A549 (cell line): ENCODE measurements at regions of chr18 and their contacts with region 1.

Region 1: DNA sequence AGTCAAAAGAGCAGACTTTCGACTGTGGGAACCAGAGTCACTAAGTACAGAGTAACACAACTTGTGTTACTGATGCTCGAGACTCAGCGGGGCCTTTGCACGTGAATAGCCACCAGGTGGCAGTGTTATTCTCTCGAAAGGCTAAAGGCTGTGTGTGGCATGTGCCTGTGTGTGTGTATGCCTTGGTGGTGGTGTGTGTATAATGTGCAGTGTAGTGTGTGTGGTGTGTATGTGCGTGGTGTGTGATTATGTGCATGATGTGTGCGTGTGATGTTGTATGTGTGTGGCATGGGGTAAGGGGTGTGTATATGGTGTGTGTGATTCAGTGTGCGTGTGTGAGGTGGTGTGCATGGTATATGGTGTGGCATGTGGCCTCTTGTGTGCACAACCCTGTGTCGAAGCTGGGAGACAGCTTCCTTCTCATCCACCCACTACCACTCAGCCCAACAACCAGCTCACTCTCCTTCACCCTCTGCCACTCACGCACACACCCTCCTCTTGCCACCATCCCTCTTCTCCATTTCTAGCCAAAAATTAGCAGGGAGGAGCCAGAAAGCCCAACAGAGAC is 83.0 kb upstream of the ZNF532 start:
- DNase-seq: peak; percentile 51 to 89
- ATAC-seq: peak; percentile 10 to 35; a peak in 3 of 6 replicates
- H3K4me3 ChIP-seq: no peak overlapping the region
- H3K27ac ChIP-seq: peak overlapping the region; percentile 98 to 99
- H3K4me1 ChIP-seq: peaks cover 38% of the 10 kb centered on the region
- CTCF ChIP-seq: peak; percentile 86
- EP300 ChIP-seq: no peak
- POLR2A ChIP-seq: no peak
- RAD21 ChIP-seq: peak; percentile 98

Region 2: DNA sequence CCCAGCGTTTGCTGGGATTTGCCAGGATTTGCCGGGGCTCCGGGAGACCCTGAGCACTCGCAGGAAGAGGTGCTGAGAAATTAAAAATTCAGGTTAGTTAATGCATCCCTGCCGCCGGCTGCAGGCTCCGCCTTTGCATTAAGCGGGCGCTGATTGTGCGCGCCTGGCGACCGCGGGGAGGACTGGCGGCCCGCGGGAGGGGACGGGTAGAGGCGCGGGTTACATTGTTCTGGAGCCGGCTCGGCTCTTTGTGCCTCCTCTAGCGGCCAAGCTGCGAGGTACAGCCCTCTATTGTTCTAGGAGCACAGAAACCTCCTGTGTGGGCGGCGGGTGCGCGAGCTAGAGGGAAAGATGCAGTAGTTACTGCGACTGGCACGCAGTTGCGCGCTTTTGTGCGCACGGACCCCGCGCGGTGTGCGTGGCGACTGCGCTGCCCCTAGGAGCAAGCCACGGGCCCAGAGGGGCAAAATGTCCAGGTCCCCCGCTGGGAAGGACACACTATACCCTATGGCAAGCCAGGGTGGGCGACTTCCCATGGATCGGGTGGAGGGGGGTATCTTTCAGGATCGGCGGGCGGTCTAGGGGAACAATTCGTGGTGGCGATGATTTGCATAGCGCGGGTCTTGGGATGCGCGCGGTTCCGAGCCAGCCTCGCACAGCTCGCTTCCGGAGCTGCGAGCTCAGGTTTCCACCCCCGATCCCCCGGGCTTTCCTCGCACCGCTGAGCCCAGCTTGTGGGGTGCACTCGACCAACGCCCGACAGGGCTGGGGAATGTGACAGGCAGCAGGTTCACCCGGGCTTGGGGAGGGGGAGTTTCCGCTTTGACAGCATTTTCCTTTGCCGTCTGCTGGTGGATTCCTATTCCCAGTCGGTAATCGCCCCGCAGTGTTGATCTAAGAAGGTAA is 1343.7 kb before region 1 on chr18:
- CTCF ChIA-PET with region 1: no interaction called
- POLR2A ChIA-PET with region 1: no interaction called
- DNase-seq: peak; percentile 49 to 82
- ATAC-seq: peak; percentile 81 to 90
- H3K4me3 ChIP-seq: peak overlapping the region; percentile 61
- H3K27ac ChIP-seq: peak overlapping the region in 1 of 2 experiments; percentile 81; a peak in 4 of 6 replicates
- H3K4me1 ChIP-seq: peaks cover 8% of the 10 kb centered on the region; the same call in 2 of the 3 replicates
- CTCF ChIP-seq: peak; percentile 50
- EP300 ChIP-seq: no peak
- POLR2A ChIP-seq: no peak
- RAD21 ChIP-seq: peak; percentile 54 to 61; a peak in 4 of 5 replicates

Region 3: DNA sequence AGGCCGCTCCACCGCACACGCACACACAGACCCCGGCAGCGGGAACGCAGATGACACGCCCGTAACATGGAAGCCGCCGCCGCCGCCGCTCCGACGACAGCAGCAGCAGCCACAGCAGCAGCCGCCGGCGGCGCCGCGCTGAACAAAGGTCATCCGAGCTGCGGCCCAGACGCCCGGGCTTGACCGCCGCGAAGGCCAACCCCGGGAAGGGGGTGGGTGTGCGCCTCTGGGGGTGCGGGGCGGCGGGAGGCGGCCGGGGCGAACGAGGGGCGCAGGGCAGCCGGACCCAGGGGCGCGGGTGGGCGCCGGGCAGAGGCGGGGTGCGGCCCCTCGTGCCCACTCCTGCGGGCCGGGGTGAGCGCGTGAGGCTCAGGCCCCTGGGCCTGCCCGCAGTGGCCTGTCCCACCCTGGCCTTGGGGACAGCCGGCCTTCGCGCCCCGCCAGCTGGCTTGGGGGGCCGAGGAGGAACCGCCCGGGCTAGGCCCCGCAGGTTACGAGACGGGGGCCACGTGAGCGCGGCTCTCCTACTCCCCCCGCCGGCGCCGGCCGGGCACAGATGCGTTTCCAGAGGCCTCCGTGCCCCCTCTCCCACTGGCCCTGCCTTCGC is 81.9 kb after region 1 on chr18:
- CTCF ChIA-PET with region 1: interaction called, 8 read pairs
- POLR2A ChIA-PET with region 1: interaction called, 14 read pairs
- DNase-seq: peak in 1 of 2 experiments; percentile 44
- ATAC-seq: peak; percentile 67 to 70
- H3K4me3 ChIP-seq: peak overlapping the region; percentile 54
- H3K27ac ChIP-seq: peak overlapping the region; percentile 99
- H3K4me1 ChIP-seq: peaks cover 55% of the 10 kb centered on the region
- CTCF ChIP-seq: no peak
- EP300 ChIP-seq: no peak
- POLR2A ChIP-seq: peak; percentile 32
- RAD21 ChIP-seq: no peak; a peak in 1 of 5 replicates

Region 4: GRCh38 chr18:59005262-59005661 is 223.6 kb after region 1 on chr18:
- CTCF ChIA-PET with region 1: interaction called, 15 read pairs
- POLR2A ChIA-PET with region 1: interaction called, 11 read pairs
- DNase-seq: peak; percentile 39 to 87
- ATAC-seq: peak; percentile 44 to 77; a peak in 4 of 6 replicates
- H3K4me3 ChIP-seq: no peak overlapping the region
- H3K27ac ChIP-seq: peak overlapping the region; percentile 85 to 92
- H3K4me1 ChIP-seq: peaks cover 68% of the 10 kb centered on the region
- CTCF ChIP-seq: no peak
- EP300 ChIP-seq: no peak
- POLR2A ChIP-seq: no peak
- RAD21 ChIP-seq: no peak

Region 5: DNA sequence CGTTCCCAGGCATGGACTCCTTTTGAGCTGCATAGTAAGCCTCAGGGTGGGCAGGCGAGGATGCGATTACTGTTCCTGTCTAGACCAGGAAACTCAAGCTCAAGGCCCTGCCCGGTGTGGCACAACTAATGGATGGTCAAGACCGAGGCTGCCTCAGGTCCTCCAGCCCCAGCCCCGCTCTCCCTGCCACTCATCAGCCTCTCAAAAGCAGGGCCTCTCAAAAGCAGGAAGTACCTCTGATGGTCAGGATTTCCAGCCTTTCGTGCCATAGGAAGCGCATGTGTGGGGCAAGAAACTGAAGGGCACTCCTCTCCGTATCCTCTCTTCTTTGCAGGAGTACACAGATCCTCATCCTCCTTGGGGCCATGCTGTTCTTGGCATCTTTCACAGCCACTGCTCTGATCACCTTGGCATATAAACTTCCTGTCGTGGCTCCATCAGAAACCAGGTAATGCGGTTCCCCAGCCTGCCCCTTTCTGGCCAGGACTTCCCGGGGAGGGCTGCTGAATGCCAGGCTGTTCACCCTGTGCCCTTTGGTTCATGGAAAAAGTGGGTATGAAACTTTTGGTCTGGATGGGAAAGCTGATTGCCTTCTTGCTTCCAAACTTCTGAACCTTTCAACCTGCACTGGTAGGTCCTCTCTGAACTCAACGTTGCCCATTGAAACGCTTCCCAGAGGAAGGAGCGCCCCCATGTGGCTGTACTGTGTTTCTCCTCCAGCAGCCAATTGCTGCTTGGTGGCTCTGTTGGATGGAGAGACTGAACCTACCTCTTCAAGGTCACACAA is 275.2 kb after region 1 on chr18:
- CTCF ChIA-PET with region 1: interaction called, 49 read pairs
- POLR2A ChIA-PET with region 1: interaction called, 3 read pairs
- DNase-seq: peak in 1 of 2 experiments; percentile 74
- ATAC-seq: peak; percentile 47 to 86; a peak in 3 of 6 replicates
- H3K4me3 ChIP-seq: no peak overlapping the region
- H3K27ac ChIP-seq: peak overlapping the region; percentile 65 to 78
- H3K4me1 ChIP-seq: peaks cover 16% of the 10 kb centered on the region; the same call in 2 of the 3 replicates
- CTCF ChIP-seq: peak; percentile 46
- EP300 ChIP-seq: no peak
- POLR2A ChIP-seq: no peak
- RAD21 ChIP-seq: peak; percentile 74 to 86

Region 6: GRCh38 chr18:59070181-59070912 is 288.6 kb after region 1 on chr18:
- CTCF ChIA-PET with region 1: interaction called, 206 read pairs
- POLR2A ChIA-PET with region 1: no interaction called
- DNase-seq: peak; percentile 55 to 86
- ATAC-seq: peak; percentile 96
- H3K4me3 ChIP-seq: no peak overlapping the region
- H3K27ac ChIP-seq: peak overlapping the region; percentile 73 to 84
- H3K4me1 ChIP-seq: peaks cover 28% of the 10 kb centered on the region
- CTCF ChIP-seq: peak; percentile 74
- EP300 ChIP-seq: no peak
- POLR2A ChIP-seq: no peak
- RAD21 ChIP-seq: peak; percentile 90 to 94